ENCODE measurements at regions of chr6 and their contacts with region 1.

Region 1: DNA sequence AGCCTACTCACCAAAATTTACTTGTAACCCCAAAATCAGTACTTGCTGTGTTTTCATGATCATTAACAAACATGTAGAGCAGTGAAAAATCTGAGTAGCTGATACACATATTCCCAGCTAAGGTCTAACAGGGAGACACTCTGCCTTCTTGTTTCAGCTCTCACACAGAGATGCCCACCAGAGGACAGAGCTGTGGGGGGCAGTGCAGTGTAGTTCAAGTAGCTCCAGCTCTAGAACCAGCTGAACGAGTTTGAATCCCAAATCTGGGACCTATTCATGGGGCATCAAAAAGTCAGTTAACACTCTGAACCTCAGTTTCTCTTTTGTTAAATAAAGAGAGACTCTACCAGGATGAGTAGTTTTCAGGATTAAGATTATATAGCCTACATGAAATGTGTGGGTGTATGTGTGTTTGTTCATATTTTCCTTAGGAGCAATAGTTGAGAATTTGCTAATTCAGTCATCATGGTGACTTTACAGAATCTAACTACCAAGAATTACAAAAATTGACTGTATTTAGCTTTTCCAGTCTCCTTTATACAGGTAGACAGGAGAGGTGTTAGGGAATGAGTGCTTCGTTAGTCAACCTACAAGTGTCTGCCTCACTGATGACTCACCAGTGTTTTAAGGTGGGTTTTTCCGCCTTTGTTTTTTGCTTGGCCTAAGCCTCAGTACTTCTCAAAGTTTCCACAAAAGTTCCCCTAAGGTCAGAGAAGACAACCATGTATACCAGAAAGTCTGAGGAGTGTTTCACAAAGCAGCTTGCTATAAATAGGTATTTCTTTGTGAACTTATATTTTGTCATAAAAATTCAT is 164.0 kb upstream of the RUNX2 start:
- DNase-seq: peak in 1 of 35 experiments; percentile 34
- ATAC-seq: peak; percentile 32 to 68 (median 52)
- H3K4me3 ChIP-seq: no peak overlapping the region
- H3K4me3 Mint-ChIP-seq: no peak overlapping the region
- H3K27ac ChIP-seq: no peak overlapping the region
- H3K27ac Mint-ChIP-seq: no peak overlapping the region
- H3K4me1 ChIP-seq: no peaks in the 10 kb centered on the region
- H3K4me1 Mint-ChIP-seq: peaks cover 8 to 17% (median 8%) of the 10 kb centered on the region in 3 donors
- H3K27me3 ChIP-seq: no peaks in the 10 kb centered on the region
- H3K27me3 Mint-ChIP-seq: no peaks in the 10 kb centered on the region

Region 2: DNA sequence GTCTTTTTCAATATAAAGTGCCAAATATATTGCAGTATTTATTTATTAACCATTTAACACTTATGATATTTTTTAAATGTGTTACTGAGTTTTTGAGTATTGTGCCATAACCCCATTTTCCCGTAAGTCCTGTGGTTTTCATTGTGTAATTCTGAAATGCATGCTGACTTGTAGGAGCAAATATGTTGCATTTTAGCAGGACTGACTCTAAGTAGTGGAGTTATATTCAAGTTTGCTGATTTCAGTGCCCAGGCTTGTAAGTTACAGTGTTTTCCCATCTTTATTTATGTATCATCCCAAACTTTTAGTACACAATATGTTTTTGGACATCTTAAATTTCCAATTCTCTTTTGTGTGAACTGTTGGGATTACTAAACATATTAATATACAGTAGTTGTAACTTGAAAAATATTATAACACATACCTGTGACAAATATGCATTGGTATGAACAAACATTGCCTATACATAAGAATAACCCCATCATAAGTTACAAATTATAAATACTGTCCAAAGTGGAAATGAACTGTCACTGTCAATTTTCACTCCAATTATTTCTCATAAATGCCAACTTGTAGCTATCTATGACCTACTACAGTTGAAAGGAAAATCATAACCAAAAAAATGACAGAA is 15.3 kb before region 1 on chr6:
- CTCF ChIA-PET with region 1: no interaction called
- POLR2A ChIA-PET with region 1: interaction called in 1 of 2 experiments, 18 read pairs
- DNase-seq: no peak
- ATAC-seq: no peak
- H3K4me3 ChIP-seq: no peak overlapping the region
- H3K4me3 Mint-ChIP-seq: no peak overlapping the region
- H3K27ac ChIP-seq: no peak overlapping the region
- H3K27ac Mint-ChIP-seq: no peak overlapping the region
- H3K4me1 ChIP-seq: no peaks in the 10 kb centered on the region
- H3K4me1 Mint-ChIP-seq: peaks cover 0 to 2% (median 0%) of the 10 kb centered on the region in 3 donors
- H3K27me3 ChIP-seq: no peaks in the 10 kb centered on the region
- H3K27me3 Mint-ChIP-seq: no peaks in the 10 kb centered on the region